ENCODE measurements at regions of chr7 and their contacts with region 1.

Region 1: GRCh38 chr7:139557857-139558581 is 34.5 kb downstream of the CLEC2L start:
- DNase-seq: no peak
- H3K4me3 ChIP-seq: no peak overlapping the region
- H3K27ac ChIP-seq: no peak overlapping the region
- H3K4me1 ChIP-seq: peaks cover 0 to 5% (median 1%) of the 10 kb centered on the region in 4 experiments
- H3K27me3 ChIP-seq: no peaks in the 10 kb centered on the region

Region 2: GRCh38 chr7:139500770-139501138 is 57.3 kb before region 1 on chr7:
- CTCF ChIA-PET with region 1: interaction called, 11 read pairs
- POLR2A ChIA-PET with region 1: no interaction called
- DNase-seq: no peak
- H3K4me3 ChIP-seq: no peak overlapping the region
- H3K27ac ChIP-seq: no peak overlapping the region
- H3K4me1 ChIP-seq: peaks cover 0 to 4% (median 1%) of the 10 kb centered on the region in 4 experiments
- H3K27me3 ChIP-seq: peaks cover 0 to 7% (median 6%) of the 10 kb centered on the region in 5 experiments

Region 3: GRCh38 chr7:139515266-139515665 is 42.8 kb before region 1 on chr7:
- CTCF ChIA-PET with region 1: no interaction called
- POLR2A ChIA-PET with region 1: no interaction called
- DNase-seq: no peak
- H3K4me3 ChIP-seq: no peak overlapping the region
- H3K27ac ChIP-seq: no peak overlapping the region
- H3K4me1 ChIP-seq: peaks cover 0 to 14% (median 11%) of the 10 kb centered on the region in 4 experiments
- H3K27me3 ChIP-seq: no peaks in the 10 kb centered on the region

Region 4: GRCh38 chr7:139598445-139599049 is 40.5 kb after region 1 on chr7:
- CTCF ChIA-PET with region 1: no interaction called
- POLR2A ChIA-PET with region 1: no interaction called
- DNase-seq: no peak
- H3K4me3 ChIP-seq: no peak overlapping the region
- H3K27ac ChIP-seq: peak overlapping the region in 1 of 2 experiments; percentile 4
- H3K4me1 ChIP-seq: peaks cover 0 to 11% (median 5%) of the 10 kb centered on the region in 4 experiments
- H3K27me3 ChIP-seq: no peaks in the 10 kb centered on the region

Measured in common myeloid progenitor, CD34-positive (primary cell).